Activated B cell treated with CpG ODN at 0.5 μM for 24 hours (primary cell): ENCODE measurements at regions of chr18 and their contacts with region 1.

Region 1: GRCh38 chr18:24600076-24600654 is 139.7 kb downstream of the HRH4 start:
- DNase-seq: no peak
- ATAC-seq: no peak
- H3K4me3 Mint-ChIP-seq: no peak overlapping the region
- H3K27ac Mint-ChIP-seq: no peak overlapping the region
- H3K4me1 Mint-ChIP-seq: no peaks in the 10 kb centered on the region
- H3K27me3 Mint-ChIP-seq: peaks cover 10% of the 10 kb centered on the region
- CTCF ChIP-seq: no peak

Region 2: DNA sequence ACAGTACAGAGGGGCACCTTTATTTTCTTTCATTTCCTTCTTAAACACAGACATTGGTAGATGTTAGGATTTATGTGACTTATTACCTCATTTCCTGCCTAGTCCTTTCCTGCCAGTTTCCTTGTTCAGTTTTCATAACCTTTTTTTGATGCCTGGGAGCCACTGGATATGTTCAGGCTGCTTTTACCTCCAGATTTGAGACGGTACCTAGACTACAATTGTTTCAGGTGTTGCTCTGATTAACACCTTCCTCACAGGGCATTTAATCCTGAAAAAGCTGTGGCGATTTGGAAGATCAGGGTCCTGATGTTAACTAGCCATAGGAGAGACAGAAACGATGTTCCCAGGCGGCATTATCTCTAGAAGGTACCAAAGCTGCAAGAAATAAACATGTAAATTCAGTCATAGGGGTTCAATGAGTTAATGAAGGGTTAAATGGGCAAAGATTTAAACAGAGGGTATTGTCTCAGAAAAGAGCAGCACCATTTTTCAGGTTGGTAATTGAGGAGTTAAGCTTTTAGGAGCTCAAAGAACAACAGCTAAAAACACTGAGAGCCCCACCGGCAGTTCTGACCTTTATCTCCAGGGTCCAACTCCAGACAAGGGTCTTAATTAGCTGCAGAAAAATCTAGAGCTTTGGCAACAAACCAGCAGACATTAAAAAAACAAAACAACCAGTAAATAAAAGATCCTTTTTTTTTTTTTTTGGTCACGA is 46.4 kb before region 1 on chr18:
- CTCF ChIA-PET with region 1: no interaction called
- POLR2A ChIA-PET with region 1: no interaction called
- intact Hi-C with region 1: no loop called
- DNase-seq: no peak
- ATAC-seq: no peak
- H3K4me3 Mint-ChIP-seq: no peak overlapping the region
- H3K27ac Mint-ChIP-seq: no peak overlapping the region
- H3K4me1 Mint-ChIP-seq: no peaks in the 10 kb centered on the region
- H3K27me3 Mint-ChIP-seq: peaks cover 2% of the 10 kb centered on the region
- CTCF ChIP-seq: no peak

Region 3: GRCh38 chr18:24726727-24727492 is 126.7 kb after region 1 on chr18:
- CTCF ChIA-PET with region 1: no interaction called
- POLR2A ChIA-PET with region 1: no interaction called
- intact Hi-C with region 1: loop called (anchors 10 kb)
- DNase-seq: no peak
- ATAC-seq: no peak
- H3K4me3 Mint-ChIP-seq: no peak overlapping the region
- H3K27ac Mint-ChIP-seq: no peak overlapping the region
- H3K4me1 Mint-ChIP-seq: peaks cover 2% of the 10 kb centered on the region
- H3K27me3 Mint-ChIP-seq: no peaks in the 10 kb centered on the region
- CTCF ChIP-seq: no peak

Region 4: GRCh38 chr18:25832001-25832604 is 1231.9 kb after region 1 on chr18:
- CTCF ChIA-PET with region 1: no interaction called
- POLR2A ChIA-PET with region 1: no interaction called
- intact Hi-C with region 1: loop called (anchors 5 kb)
- DNase-seq: no peak
- ATAC-seq: no peak
- H3K4me3 Mint-ChIP-seq: no peak overlapping the region
- H3K27ac Mint-ChIP-seq: no peak overlapping the region
- H3K4me1 Mint-ChIP-seq: no peaks in the 10 kb centered on the region
- H3K27me3 Mint-ChIP-seq: peaks cover 2% of the 10 kb centered on the region
- CTCF ChIP-seq: no peak